ENCODE measurements at regions of chr19 and their contacts with region 1.

Region 1: GRCh38 chr19:47863514-47863936 is 4.5 kb downstream of the TPRX2 start:
- DNase-seq: peak; percentile 55
- ATAC-seq: peak; percentile 100
- H3K4me3 ChIP-seq: no peak overlapping the region
- H3K27ac ChIP-seq: no peak overlapping the region
- H3K4me1 ChIP-seq: no peaks in the 10 kb centered on the region
- H3K27me3 ChIP-seq: peaks cover 6% of the 10 kb centered on the region
- CTCF ChIP-seq: peak; percentile 88
- POLR2A ChIP-seq: no peak
- RAD21 ChIP-seq: peak; percentile 77

Region 2: DNA sequence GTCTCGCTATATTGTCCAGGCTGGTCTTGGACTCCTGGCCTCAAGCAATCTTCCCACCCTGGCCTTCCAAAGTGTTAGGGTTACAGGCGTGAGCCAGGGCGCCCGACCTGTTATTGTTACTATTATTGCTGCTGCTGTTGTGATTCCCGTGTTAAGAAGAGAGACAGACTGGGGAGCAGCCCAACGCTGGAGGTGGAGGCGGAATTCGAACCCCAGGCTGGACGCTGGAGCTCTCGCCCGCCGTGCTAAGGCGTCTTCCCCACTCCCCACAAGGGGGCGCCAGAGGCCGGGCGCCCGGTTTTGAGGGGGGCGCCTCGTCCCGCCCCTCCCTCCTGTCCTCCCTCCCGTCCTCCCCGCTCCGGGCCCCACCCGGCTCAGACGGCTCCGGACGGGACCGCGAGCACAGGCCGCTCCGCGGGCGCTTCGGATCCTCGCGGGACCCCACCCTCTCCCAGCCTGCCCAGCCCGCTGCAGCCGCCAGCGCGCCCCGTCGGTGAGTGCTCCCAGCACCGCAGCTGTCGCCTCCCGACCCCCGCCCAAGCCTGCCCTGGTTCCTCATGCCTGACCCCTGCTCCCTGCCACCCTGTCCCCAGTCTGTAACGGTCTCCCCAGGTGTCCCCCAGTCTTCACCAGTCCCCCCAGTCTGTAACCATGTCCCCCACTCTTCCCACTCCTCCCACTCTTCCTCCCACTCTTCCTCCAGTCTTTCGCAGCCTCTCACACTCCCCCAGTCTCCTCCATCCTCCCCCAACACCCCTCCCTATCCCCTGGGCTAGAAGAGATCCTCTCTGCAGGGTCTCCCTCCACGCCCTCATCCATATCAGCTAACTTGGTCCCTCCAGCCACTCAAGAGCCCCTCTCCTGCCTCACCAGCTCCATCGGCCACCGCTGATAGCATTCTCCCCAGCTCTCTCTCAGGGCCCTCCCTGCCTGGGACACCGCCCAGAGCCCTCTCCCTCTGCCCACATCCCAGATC is 150.2 kb before region 1 on chr19 and contains the start of gene EHD2:
- CTCF ChIA-PET with region 1: no interaction called
- POLR2A ChIA-PET with region 1: no interaction called
- dilution Hi-C with region 1: no loop called
- in situ Hi-C with region 1: no loop called
- intact Hi-C with region 1: loop called (anchors 1 kb)
- DNase-seq: peak; percentile 76
- ATAC-seq: peak; percentile 92
- H3K4me3 ChIP-seq: peak within 1 kb of the TSS; percentile 90
- H3K27ac ChIP-seq: peak within 1 kb of the TSS; percentile 98
- H3K4me1 ChIP-seq: peaks cover 15% of the 10 kb centered on the region
- H3K27me3 ChIP-seq: no peaks in the 10 kb centered on the region
- CTCF ChIP-seq: peak; percentile 97
- POLR2A ChIP-seq: peak; percentile 93
- RAD21 ChIP-seq: peak; percentile 95
- total RNA-seq, gene EHD2: 31.9 and 35.3 TPM in 2 replicates

Region 3: GRCh38 chr19:47765523-47766358 is 97.8 kb before region 1 on chr19:
- CTCF ChIA-PET with region 1: no interaction called
- POLR2A ChIA-PET with region 1: no interaction called
- dilution Hi-C with region 1: no loop called
- in situ Hi-C with region 1: no loop called
- intact Hi-C with region 1: loop called (anchors 1 kb)
- DNase-seq: peak; percentile 44
- ATAC-seq: peak; percentile 85
- H3K4me3 ChIP-seq: no peak overlapping the region
- H3K27ac ChIP-seq: no peak overlapping the region
- H3K4me1 ChIP-seq: no peaks in the 10 kb centered on the region
- H3K27me3 ChIP-seq: peaks cover 7% of the 10 kb centered on the region; the same call in 1 of the 2 replicates
- CTCF ChIP-seq: peak; percentile 67
- POLR2A ChIP-seq: no peak
- RAD21 ChIP-seq: peak; percentile 64

Region 4: DNA sequence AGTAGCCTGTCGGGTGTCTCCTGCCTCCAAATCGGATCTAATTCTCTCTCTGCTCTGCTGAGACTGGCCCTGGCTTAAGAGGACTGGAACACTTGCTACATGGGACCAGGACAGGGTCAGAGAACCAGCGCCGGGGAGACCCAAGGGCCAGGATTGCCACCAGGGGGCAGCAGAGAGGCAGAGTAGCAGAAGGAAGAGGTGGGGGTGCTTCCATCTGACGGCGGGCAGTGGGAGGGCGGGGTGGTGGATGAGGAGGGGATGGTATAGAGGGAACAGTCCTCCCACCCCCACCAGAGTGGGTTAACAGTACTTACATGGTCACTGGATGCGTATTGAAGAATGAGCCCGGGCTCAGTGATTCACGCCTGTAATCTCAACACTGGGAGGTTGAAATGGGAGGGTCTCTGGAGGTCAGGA is 73.1 kb before region 1 on chr19:
- CTCF ChIA-PET with region 1: interaction called, 3 read pairs
- POLR2A ChIA-PET with region 1: no interaction called
- dilution Hi-C with region 1: no loop called
- in situ Hi-C with region 1: no loop called
- intact Hi-C with region 1: loop called (anchors 1 kb)
- DNase-seq: peak; percentile 59
- ATAC-seq: peak; percentile 88
- H3K4me3 ChIP-seq: no peak overlapping the region
- H3K27ac ChIP-seq: no peak overlapping the region
- H3K4me1 ChIP-seq: no peaks in the 10 kb centered on the region
- H3K27me3 ChIP-seq: no peaks in the 10 kb centered on the region
- CTCF ChIP-seq: peak; percentile 72
- POLR2A ChIP-seq: no peak
- RAD21 ChIP-seq: no peak

Region 5: GRCh38 chr19:47813304-47814004 is 50.1 kb before region 1 on chr19:
- CTCF ChIA-PET with region 1: no interaction called
- POLR2A ChIA-PET with region 1: no interaction called
- dilution Hi-C with region 1: no loop called
- in situ Hi-C with region 1: no loop called
- intact Hi-C with region 1: loop called (anchors 1 kb)
- DNase-seq: peak; percentile 18
- ATAC-seq: peak; percentile 92
- H3K4me3 ChIP-seq: no peak overlapping the region
- H3K27ac ChIP-seq: no peak overlapping the region
- H3K4me1 ChIP-seq: no peaks in the 10 kb centered on the region
- H3K27me3 ChIP-seq: peaks cover 5% of the 10 kb centered on the region; the same call in 1 of the 2 replicates
- CTCF ChIP-seq: peak; percentile 46
- POLR2A ChIP-seq: no peak
- RAD21 ChIP-seq: no peak; the same call in 1 of the 2 replicates

Measured in IMR-90 (cell line).